ENCODE measurements at regions of chr2 and their contacts with region 1.

Region 1: DNA sequence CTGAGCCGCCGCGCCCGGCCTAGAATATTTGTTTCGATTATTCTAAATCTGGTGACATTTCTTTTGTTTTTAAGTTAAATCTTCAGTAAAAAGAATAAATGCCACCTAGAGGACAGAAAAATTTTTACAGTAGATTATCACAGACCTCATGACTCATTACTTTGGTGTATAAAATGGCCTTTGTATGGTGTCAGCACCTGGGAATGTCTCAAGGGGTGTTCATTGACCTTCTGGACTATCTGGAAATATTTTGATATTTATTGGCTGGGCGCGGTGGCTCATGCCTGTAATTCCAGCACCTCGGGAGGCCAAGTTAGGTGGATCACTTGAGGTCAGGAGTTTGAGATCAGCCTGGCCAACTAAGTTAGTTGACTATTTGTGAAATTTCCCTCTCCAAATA is 30.3 kb upstream of the SLC30A6 start:
- DNase-seq: peak; percentile 68
- ATAC-seq: peak; percentile 88; the same call in 2 of the 3 replicates
- H3K4me3 ChIP-seq: no peak overlapping the region
- H3K27ac ChIP-seq: no peak overlapping the region
- H3K4me1 ChIP-seq: no peaks in the 10 kb centered on the region
- H3K27me3 ChIP-seq: no peaks in the 10 kb centered on the region
- CTCF ChIP-seq: peak; percentile 25; the same call in 1 of the 2 replicates
- EP300 ChIP-seq: no peak
- POLR2A ChIP-seq: no peak
- RAD21 ChIP-seq: 0 out of 2 replicates have a peak, but pooled peaks have one; percentile 13

Region 2: GRCh38 chr2:31475692-31476091 is 659.7 kb before region 1 on chr2:
- CTCF ChIA-PET with region 1: no interaction called
- POLR2A ChIA-PET with region 1: no interaction called
- in situ Hi-C with region 1: no loop called
- intact Hi-C with region 1: no loop called
- DNase-seq: no peak
- ATAC-seq: no peak
- H3K4me3 ChIP-seq: no peak overlapping the region
- H3K27ac ChIP-seq: no peak overlapping the region
- H3K4me1 ChIP-seq: no peaks in the 10 kb centered on the region
- H3K27me3 ChIP-seq: no peaks in the 10 kb centered on the region
- CTCF ChIP-seq: no peak
- EP300 ChIP-seq: no peak
- POLR2A ChIP-seq: no peak
- RAD21 ChIP-seq: no peak

Region 3: GRCh38 chr2:31654241-31654640 is 481.2 kb before region 1 on chr2:
- CTCF ChIA-PET with region 1: no interaction called
- POLR2A ChIA-PET with region 1: no interaction called
- in situ Hi-C with region 1: no loop called
- intact Hi-C with region 1: no loop called
- DNase-seq: no peak
- ATAC-seq: no peak
- H3K4me3 ChIP-seq: no peak overlapping the region
- H3K27ac ChIP-seq: no peak overlapping the region
- H3K4me1 ChIP-seq: no peaks in the 10 kb centered on the region
- H3K27me3 ChIP-seq: peaks cover 0 to 22% of the 10 kb centered on the region in 2 experiments; a peak in 2 of 5 replicates
- CTCF ChIP-seq: no peak
- EP300 ChIP-seq: no peak
- POLR2A ChIP-seq: no peak
- RAD21 ChIP-seq: no peak

Region 4: DNA sequence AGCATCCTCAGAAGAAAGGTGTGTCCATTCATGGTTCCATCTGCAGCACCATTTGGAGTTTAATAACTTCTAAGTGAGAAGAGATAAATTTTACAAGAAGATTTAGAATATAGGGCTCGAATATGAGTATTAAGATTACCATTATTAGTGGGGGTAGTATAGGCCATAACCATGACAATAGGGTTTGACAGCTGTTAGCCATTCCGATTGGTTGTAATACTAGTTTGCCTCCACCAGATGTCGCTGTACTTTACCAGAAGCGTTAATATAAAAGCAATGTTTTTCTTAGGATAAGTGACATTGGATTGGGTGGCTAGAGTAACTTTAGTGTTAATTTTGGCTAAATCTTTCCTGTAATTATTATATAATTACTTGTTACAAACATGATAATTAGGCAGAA is 447.1 kb before region 1 on chr2:
- CTCF ChIA-PET with region 1: no interaction called
- POLR2A ChIA-PET with region 1: no interaction called
- in situ Hi-C with region 1: loop called (anchors 25 kb)
- intact Hi-C with region 1: no loop called
- DNase-seq: no peak
- ATAC-seq: no peak
- H3K4me3 ChIP-seq: no peak overlapping the region
- H3K27ac ChIP-seq: no peak overlapping the region
- H3K4me1 ChIP-seq: peaks cover 8% of the 10 kb centered on the region
- H3K27me3 ChIP-seq: no peaks in the 10 kb centered on the region
- CTCF ChIP-seq: peak; percentile 67
- EP300 ChIP-seq: no peak
- POLR2A ChIP-seq: no peak
- RAD21 ChIP-seq: no peak

Region 5: DNA sequence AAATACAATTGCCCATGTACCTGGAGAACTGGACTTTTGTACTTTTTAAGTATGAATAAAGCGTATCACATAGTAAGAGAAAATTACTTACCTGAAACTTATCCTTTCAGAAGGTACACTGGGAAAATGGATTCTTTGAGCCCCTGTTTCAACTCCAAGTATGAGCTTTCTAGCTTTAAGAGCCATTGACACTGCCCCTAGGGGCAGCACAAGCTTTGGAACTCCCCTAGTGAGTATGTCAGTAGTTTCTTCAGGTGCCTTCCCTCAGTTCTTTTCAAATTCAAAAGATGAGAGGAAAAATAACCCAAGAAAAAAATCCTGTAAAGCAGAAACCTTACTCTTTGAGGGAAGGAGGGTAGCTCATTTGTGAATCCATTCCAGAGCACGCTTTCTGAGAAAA is 248.7 kb before region 1 on chr2:
- CTCF ChIA-PET with region 1: no interaction called
- POLR2A ChIA-PET with region 1: no interaction called
- in situ Hi-C with region 1: no loop called
- intact Hi-C with region 1: loop called (anchors 1 kb)
- DNase-seq: peak; percentile 50
- ATAC-seq: peak; percentile 97
- H3K4me3 ChIP-seq: no peak overlapping the region
- H3K27ac ChIP-seq: no peak overlapping the region
- H3K4me1 ChIP-seq: no peaks in the 10 kb centered on the region
- H3K27me3 ChIP-seq: no peaks in the 10 kb centered on the region
- CTCF ChIP-seq: peak; percentile 49
- EP300 ChIP-seq: no peak
- POLR2A ChIP-seq: no peak
- RAD21 ChIP-seq: no peak

Region 6: DNA sequence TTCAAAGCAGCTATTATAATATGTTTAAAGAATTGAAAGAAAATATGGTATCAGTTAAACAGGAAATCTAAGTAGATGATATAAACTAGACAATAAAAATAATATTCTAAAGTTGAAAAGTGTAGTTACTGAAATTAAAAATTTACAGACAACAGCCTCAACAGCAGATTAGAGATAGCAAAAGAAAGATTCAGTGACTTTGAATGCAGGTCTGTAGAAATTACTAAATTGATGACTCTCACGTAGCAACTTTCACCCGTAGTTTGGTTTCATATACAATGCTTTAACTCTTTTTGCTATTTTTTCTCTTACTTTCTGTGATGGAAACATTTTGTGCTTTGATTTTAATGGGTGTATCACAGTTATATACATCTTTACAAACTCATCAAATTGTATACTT is 27.3 kb before region 1 on chr2:
- CTCF ChIA-PET with region 1: no interaction called
- POLR2A ChIA-PET with region 1: no interaction called
- in situ Hi-C with region 1: loop called (anchors 5 kb)
- intact Hi-C with region 1: no loop called
- DNase-seq: no peak
- ATAC-seq: no peak
- H3K4me3 ChIP-seq: no peak overlapping the region
- H3K27ac ChIP-seq: no peak overlapping the region
- H3K4me1 ChIP-seq: no peaks in the 10 kb centered on the region
- H3K27me3 ChIP-seq: no peaks in the 10 kb centered on the region
- CTCF ChIP-seq: no peak
- EP300 ChIP-seq: no peak
- POLR2A ChIP-seq: no peak
- RAD21 ChIP-seq: no peak

Region 7: DNA sequence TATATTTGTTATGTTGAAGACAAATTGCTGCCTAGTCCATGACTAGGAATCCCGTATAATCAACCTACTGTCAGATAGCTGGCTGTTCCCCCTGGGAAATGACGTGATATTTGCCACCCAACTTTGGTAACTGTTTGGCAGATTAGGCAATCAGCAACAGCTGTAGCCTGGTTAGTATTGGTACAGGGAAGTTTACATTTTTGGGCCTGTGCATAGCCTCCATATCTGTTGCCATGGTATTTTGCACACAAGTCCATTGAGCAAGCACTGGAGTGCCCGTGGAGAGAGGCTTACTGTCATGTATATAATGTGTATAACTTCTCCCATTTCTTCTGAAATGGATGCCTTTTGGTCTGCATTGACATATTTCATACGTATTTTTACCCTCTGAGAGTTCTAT is 249.1 kb after region 1 on chr2:
- CTCF ChIA-PET with region 1: no interaction called
- POLR2A ChIA-PET with region 1: no interaction called
- in situ Hi-C with region 1: no loop called
- intact Hi-C with region 1: no loop called
- DNase-seq: no peak
- ATAC-seq: peak; percentile 62
- H3K4me3 ChIP-seq: no peak overlapping the region
- H3K27ac ChIP-seq: no peak overlapping the region
- H3K4me1 ChIP-seq: peaks cover 2% of the 10 kb centered on the region
- H3K27me3 ChIP-seq: no peaks in the 10 kb centered on the region
- CTCF ChIP-seq: no peak
- EP300 ChIP-seq: no peak
- POLR2A ChIP-seq: no peak
- RAD21 ChIP-seq: no peak

Measured in HepG2 (cell line).